ENCODE measurements at regions of chr15 and their contacts with region 1.

Region 1: GRCh38 chr15:67863442-67863987 is 23.7 kb upstream of the RNU6-1 start:
- DNase-seq: no peak
- H3K4me3 ChIP-seq: peak overlapping the region; percentile 51
- CTCF ChIP-seq: peak; percentile 92

Region 2: DNA sequence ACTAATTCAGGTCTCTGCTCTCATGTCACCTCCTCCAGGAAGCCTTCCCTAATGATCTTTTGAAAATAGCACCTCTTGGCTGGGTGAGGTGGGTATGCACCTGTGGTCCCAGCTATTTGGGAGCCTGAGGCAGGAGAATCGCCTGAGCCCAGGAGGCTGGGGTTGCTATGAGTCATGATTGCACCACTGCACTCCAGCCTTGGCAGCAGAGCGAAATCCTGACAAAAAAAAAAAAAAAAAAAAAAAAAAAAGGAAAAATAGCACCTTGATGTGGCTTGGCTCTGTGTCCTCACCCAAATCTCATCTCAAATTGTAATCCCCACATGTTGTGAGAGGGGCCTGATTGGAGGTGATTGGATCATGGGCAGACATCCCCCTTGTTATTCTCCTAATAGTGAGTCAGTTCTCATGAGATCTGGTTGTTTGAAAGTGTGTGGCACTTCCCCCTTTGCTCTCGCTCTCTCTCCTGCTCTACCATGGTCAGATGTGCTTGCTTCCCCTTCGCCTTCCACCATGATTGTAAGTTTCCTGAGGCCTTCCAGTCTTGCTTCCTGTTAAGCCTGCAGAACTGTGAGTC is 12.4 kb before region 1 on chr15:
- CTCF ChIA-PET with region 1: interaction called, 25 read pairs
- POLR2A ChIA-PET with region 1: no interaction called
- DNase-seq: no peak
- H3K4me3 ChIP-seq: no peak overlapping the region
- CTCF ChIP-seq: no peak

Region 3: GRCh38 chr15:67992834-67993233 is 129.3 kb after region 1 on chr15:
- CTCF ChIA-PET with region 1: no interaction called
- POLR2A ChIA-PET with region 1: no interaction called
- DNase-seq: no peak
- H3K4me3 ChIP-seq: no peak overlapping the region
- CTCF ChIP-seq: no peak

Region 4: GRCh38 chr15:68053701-68054627 is 190.4 kb after region 1 on chr15 and contains the start of gene PIAS1:
- CTCF ChIA-PET with region 1: interaction called, 32 read pairs
- POLR2A ChIA-PET with region 1: interaction called, 3 read pairs
- DNase-seq: no peak
- H3K4me3 ChIP-seq: peak within 1 kb of the TSS; percentile 81
- CTCF ChIP-seq: no peak

Region 5: GRCh38 chr15:68163191-68163590 is 299.7 kb after region 1 on chr15:
- CTCF ChIA-PET with region 1: interaction called, 212 read pairs
- POLR2A ChIA-PET with region 1: no interaction called
- DNase-seq: no peak
- H3K4me3 ChIP-seq: no peak overlapping the region
- CTCF ChIP-seq: no peak

Region 6: DNA sequence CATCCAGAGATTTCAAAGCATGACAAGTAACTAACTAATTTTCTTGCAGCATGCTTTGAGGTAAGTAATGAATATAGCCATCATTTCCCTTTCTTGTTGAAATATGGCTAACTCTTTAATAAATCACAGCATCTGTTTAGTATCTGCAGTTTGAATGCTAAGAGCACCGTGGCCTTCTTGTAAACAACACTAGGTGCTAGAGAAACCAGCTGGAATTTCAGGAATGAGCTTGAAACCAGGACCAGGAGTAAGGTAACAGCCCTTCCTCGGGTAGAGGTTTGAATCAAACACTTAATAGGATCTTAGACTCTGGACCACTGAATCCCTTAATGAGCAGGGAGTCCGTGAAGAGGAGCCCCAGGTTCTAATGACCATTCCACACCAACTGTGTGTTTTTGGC is 328.0 kb after region 1 on chr15:
- CTCF ChIA-PET with region 1: interaction called, 21 read pairs
- POLR2A ChIA-PET with region 1: no interaction called
- DNase-seq: no peak
- H3K4me3 ChIP-seq: no peak overlapping the region
- CTCF ChIP-seq: no peak

Region 7: DNA sequence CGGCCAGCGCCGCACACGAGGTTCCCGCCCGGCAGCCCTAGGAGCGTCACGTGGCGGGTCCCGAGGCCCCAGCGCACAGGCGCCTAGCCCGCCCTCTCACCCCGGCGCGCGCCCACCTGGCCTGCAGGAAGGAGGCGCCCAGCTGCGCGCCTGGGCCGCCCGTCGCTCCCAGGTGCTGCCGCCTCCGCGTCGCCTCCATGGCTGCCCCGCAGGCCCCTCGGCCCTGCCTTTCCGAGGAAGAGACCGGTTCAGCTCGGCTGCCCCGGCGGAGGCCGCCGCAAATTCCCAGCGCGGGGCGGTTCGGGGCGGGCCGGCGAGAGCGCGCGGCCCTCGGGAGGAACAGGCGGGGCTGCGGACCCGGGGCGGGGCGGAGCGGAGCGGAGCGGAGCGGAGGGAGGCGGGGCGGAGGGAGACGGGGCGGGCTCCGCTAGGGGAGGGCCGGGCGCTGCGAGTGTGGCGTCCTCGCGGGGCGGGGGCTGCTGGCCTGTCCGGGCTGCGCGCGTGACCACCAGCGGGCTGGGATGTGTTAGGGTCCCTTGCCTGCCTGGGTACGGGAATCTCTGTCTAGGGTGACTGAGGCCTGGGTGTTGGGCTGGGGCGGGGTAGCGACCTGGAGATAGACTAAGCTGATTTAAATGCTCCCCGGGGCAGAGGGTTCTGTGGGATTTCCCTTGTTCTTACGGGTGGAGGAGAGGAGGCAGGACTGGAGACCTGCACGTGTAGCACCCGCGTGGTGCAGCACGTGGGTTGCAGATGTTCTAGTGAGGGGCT is 366.1 kb after region 1 on chr15 and contains the start of gene CLN6:
- CTCF ChIA-PET with region 1: interaction called, 12 read pairs
- POLR2A ChIA-PET with region 1: no interaction called
- DNase-seq: peak; percentile 28
- H3K4me3 ChIP-seq: peak within 1 kb of the TSS; percentile 77
- CTCF ChIP-seq: no peak